ENCODE measurements at regions of chr10 and their contacts with region 1.

Region 1: DNA sequence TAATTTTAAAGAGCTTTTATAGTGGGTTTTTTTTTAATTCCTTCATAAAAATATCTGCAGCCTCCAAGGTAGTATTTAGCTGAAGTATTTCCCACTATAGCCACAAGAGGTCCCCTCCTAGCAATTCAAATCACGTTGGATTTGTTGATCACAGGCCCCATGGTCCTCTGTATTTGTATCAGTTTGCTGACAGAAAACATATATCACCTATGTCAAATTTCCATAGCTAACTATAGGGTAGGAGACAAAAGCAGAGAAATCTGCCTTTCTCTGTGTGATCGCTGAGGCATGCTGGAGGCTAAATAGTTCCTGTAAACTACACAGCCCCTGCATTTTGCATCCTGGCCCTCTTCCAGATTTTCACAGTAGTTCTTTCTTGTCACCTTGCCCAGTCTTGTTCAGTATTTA is 1.7 kb upstream of the CTNNA3 start:
- DNase-seq: peak; percentile 42
- ATAC-seq: peak; percentile 71
- H3K4me3 Mint-ChIP-seq: no peak overlapping the region
- H3K27ac Mint-ChIP-seq: no peak overlapping the region
- H3K4me1 Mint-ChIP-seq: peaks cover 3% of the 10 kb centered on the region
- H3K27me3 Mint-ChIP-seq: peaks cover 45% of the 10 kb centered on the region

Region 2: GRCh38 chr10:67666416-67667034 is 31.2 kb before region 1 on chr10:
- CTCF ChIA-PET with region 1: interaction called, 14 read pairs
- DNase-seq: no peak
- ATAC-seq: no peak
- H3K4me3 Mint-ChIP-seq: no peak overlapping the region
- H3K27ac Mint-ChIP-seq: no peak overlapping the region
- H3K4me1 Mint-ChIP-seq: no peaks in the 10 kb centered on the region
- H3K27me3 Mint-ChIP-seq: peaks cover 14% of the 10 kb centered on the region

Region 3: DNA sequence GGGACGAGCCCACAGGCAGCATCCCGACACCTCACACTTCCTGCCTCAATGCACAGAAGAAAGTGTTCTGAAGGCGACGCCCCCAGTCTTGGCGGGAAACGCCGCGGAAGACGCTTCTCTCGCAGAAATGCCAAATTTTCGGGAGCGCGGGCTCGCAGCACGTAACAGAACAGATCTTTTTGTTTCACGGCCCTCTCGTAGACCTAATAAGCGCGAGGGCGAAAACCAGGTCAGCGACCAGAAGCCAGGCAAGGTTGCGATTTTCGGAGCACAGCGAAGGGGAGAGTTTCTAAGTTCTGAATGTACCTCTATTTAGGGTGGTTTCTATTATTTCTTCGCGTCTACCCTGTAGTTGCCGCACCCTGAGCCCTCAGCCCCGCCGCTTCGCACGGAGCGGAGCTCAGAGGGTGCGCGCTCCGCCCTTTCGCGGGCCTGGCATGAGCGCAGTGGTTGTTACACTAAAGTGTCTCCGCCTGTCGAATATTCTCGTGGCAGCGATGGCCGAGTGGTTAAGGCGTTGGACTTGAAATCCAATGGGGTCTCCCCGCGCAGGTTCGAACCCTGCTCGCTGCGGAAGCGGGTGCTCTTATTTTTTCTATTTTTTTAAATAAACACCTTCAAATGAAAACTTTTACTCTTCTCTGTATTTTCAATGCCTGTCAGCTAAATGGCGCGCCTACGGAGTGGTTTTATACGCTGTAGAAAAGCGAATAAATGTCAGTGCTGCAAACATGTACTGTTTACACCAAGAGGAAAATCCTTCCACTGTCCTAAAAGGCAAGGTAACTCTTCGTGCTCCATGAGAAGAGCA is 66.5 kb after region 1 on chr10:
- CTCF ChIA-PET with region 1: interaction called, 13 read pairs
- DNase-seq: peak; percentile 97
- ATAC-seq: peak; percentile 85
- H3K4me3 Mint-ChIP-seq: peak overlapping the region; percentile 92
- H3K27ac Mint-ChIP-seq: peak overlapping the region; percentile 98
- H3K4me1 Mint-ChIP-seq: peaks cover 21% of the 10 kb centered on the region
- H3K27me3 Mint-ChIP-seq: peaks cover 3% of the 10 kb centered on the region

Region 4: GRCh38 chr10:67772894-67773511 is 75.3 kb after region 1 on chr10:
- CTCF ChIA-PET with region 1: interaction called, 166 read pairs
- DNase-seq: peak; percentile 50
- ATAC-seq: peak; percentile 84
- H3K4me3 Mint-ChIP-seq: no peak overlapping the region
- H3K27ac Mint-ChIP-seq: peak overlapping the region; percentile 83
- H3K4me1 Mint-ChIP-seq: peaks cover 48% of the 10 kb centered on the region
- H3K27me3 Mint-ChIP-seq: no peaks in the 10 kb centered on the region

Region 5: GRCh38 chr10:67779465-67780203 is 81.9 kb after region 1 on chr10:
- CTCF ChIA-PET with region 1: interaction called, 166 read pairs
- DNase-seq: peak; percentile 81
- ATAC-seq: peak; percentile 74
- H3K4me3 Mint-ChIP-seq: no peak overlapping the region
- H3K27ac Mint-ChIP-seq: no peak overlapping the region
- H3K4me1 Mint-ChIP-seq: peaks cover 51% of the 10 kb centered on the region
- H3K27me3 Mint-ChIP-seq: no peaks in the 10 kb centered on the region